PC-9 (cell line): ENCODE measurements at regions of chr13 and their contacts with region 1.

Region 1: DNA sequence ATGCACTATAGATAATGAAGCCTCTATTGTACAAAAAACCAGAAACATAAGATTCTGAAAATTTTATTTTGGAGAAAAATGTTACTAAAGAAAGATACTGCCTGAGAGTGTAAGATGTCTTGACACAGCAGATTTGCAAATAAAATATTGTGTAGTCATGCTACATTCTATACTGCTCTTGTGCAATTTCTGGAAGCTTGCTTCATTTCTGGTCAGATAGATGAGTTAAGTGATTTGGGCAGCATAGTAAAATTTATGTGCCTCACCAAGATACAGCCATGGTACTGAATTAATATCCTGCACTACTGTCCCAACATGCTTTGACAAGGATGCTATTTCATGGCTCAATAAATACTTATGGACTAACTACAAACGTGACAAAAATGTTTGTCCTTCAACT is 55.1 kb upstream of the STARD13 start:
- DNase-seq: peak in 1 of 2 experiments; percentile 40
- H3K4me3 ChIP-seq: no peak overlapping the region
- H3K27ac ChIP-seq: no peak overlapping the region
- H3K4me1 ChIP-seq: no peaks in the 10 kb centered on the region
- H3K27me3 ChIP-seq: no peaks in the 10 kb centered on the region
- CTCF ChIP-seq: no peak

Region 2: GRCh38 chr13:31908677-31909386 is 1431.8 kb before region 1 on chr13:
- CTCF ChIA-PET with region 1: no interaction called
- POLR2A ChIA-PET with region 1: no interaction called
- intact Hi-C with region 1: no loop called
- DNase-seq: no peak
- H3K4me3 ChIP-seq: no peak overlapping the region
- H3K27ac ChIP-seq: no peak overlapping the region
- H3K4me1 ChIP-seq: peaks cover 27% of the 10 kb centered on the region
- H3K27me3 ChIP-seq: no peaks in the 10 kb centered on the region
- CTCF ChIP-seq: no peak

Region 3: GRCh38 chr13:31930901-31931522 is 1409.6 kb before region 1 on chr13:
- CTCF ChIA-PET with region 1: no interaction called
- POLR2A ChIA-PET with region 1: interaction called, 25 read pairs
- intact Hi-C with region 1: no loop called
- DNase-seq: peak in 1 of 2 experiments; percentile 46
- H3K4me3 ChIP-seq: no peak overlapping the region
- H3K27ac ChIP-seq: peak overlapping the region; percentile 54
- H3K4me1 ChIP-seq: peaks cover 49% of the 10 kb centered on the region
- H3K27me3 ChIP-seq: no peaks in the 10 kb centered on the region
- CTCF ChIP-seq: no peak

Region 4: DNA sequence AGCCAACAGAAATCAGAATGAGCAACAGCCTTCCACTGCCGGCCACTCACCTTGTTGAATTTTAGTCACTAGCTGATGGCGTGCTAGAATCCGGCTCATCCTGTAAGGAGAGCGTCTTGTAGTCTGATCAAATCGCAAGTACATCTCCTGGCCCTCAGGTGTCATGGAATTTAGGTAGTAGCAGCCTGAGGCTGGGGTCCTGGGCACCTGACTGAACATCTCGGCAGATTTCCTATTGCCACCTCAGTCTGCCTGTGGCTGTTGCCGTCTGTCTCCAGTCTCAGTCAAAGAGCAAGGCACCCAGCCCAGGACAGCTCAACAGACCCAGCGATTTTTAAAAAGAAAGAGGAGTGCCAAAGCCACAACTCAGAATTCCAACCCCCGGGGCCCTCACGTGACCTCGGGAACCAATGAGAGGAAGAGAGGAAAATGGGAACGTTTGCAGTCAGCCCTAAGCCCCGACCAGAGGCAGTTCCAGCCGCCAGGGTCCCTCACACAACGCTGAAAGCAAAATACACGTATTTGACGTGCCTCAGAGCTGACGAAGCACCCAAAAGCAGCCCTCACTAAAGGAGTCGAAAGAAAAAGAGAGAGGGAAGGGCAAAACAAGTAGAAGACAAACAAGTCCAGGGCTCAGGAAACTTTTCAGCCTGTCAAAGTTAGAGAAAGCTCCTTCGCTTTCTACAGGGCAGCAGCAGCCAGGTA is 55.1 kb before region 1 on chr13 and contains the start of gene STARD13:
- CTCF ChIA-PET with region 1: no interaction called
- POLR2A ChIA-PET with region 1: no interaction called
- intact Hi-C with region 1: no loop called
- DNase-seq: peak; percentile 91 to 93
- H3K4me3 ChIP-seq: peak within 1 kb of the TSS; percentile 94
- H3K27ac ChIP-seq: peak within 1 kb of the TSS; percentile 81
- H3K4me1 ChIP-seq: peaks cover 52% of the 10 kb centered on the region
- H3K27me3 ChIP-seq: no peaks in the 10 kb centered on the region
- CTCF ChIP-seq: no peak; the same call in 1 of the 2 replicates
- total RNA-seq, gene STARD13: 13.9 and 19.6 TPM in 2 replicates